ENCODE measurements at regions of chr17 and their contacts with region 1.

Region 1: DNA sequence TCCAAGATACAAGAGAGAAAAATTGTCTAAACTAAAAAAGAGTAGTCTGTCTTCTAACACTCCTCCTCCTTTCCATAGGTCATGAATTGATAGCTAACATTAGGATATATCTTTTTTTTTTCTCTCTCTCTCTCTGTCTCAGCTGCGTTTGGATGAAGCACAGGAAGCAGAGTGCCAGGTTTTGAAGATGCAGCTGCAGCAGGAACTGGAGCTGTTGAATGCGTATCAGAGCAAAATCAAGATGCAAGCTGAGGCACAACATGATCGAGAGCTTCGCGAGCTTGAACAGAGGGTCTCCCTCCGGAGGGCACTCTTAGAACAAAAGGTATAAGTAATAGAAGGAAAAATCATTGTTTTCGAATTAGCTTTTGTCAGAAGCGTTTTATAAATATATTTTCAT is 32.9 kb downstream of the ABHD15 start:
- DNase-seq: no peak
- H3K4me3 ChIP-seq: no peak overlapping the region
- H3K27ac ChIP-seq: no peak overlapping the region
- H3K4me1 ChIP-seq: no peaks in the 10 kb centered on the region
- H3K27me3 ChIP-seq: no peaks in the 10 kb centered on the region
- CTCF ChIP-seq: no peak
- POLR2A ChIP-seq: no peak

Region 2: GRCh38 chr17:29369831-29370735 is 163.9 kb before region 1 on chr17:
- intact Hi-C with region 1: loop called (anchors 5 kb)
- DNase-seq: no peak
- H3K4me3 ChIP-seq: no peak overlapping the region
- H3K27ac ChIP-seq: no peak overlapping the region
- H3K4me1 ChIP-seq: no peaks in the 10 kb centered on the region
- H3K27me3 ChIP-seq: no peaks in the 10 kb centered on the region
- CTCF ChIP-seq: peak; percentile 78 to 81 (median 81)
- POLR2A ChIP-seq: no peak